CD14-positive monocyte (primary cell): ENCODE measurements at regions of chr16 and their contacts with region 1.

Region 1: GRCh38 chr16:89560378-89561141 is at the start of gene RPL13:
- DNase-seq: peak; percentile 93 to 97 (median 94)
- H3K4me3 ChIP-seq: peak within 1 kb of the TSS; percentile 64 to 95 (median 82)
- H3K4me3 Mint-ChIP-seq: peak within 1 kb of the TSS; percentile 92 to 98
- H3K27ac ChIP-seq: peak within 1 kb of the TSS; percentile 92 to 93
- H3K27ac Mint-ChIP-seq: peak within 1 kb of the TSS; percentile 95 to 99 (median 98)
- H3K4me1 ChIP-seq: peaks cover 41 to 57% of the 10 kb centered on the region in 2 donors
- H3K4me1 Mint-ChIP-seq: peaks cover 65% of the 10 kb centered on the region
- H3K27me3 ChIP-seq: peaks cover 0 to 2% of the 10 kb centered on the region in 2 donors
- H3K27me3 Mint-ChIP-seq: peaks cover 1 to 3% (median 1%) of the 10 kb centered on the region in 3 donors
- CTCF ChIP-seq: no peak
- polyA plus RNA-seq, gene RPL13: 1,251 to 2,437 (median 1,329) TPM

Region 2: GRCh38 chr16:89330177-89330856 is 230.2 kb before region 1 on chr16:
- intact Hi-C with region 1: loop called (anchors 5 kb)
- DNase-seq: peak; percentile 20 to 57 (median 37)
- H3K4me3 ChIP-seq: no peak overlapping the region
- H3K4me3 Mint-ChIP-seq: peak overlapping the region in 1 of 2 donors; percentile 64
- H3K27ac ChIP-seq: peak overlapping the region; percentile 61 to 79
- H3K27ac Mint-ChIP-seq: peak overlapping the region in 6 of 7 donors; percentile 66 to 87 (median 79)
- H3K4me1 ChIP-seq: peaks cover 38 to 59% of the 10 kb centered on the region in 2 donors
- H3K4me1 Mint-ChIP-seq: peaks cover 60% of the 10 kb centered on the region
- H3K27me3 ChIP-seq: no peaks in the 10 kb centered on the region
- H3K27me3 Mint-ChIP-seq: no peaks in the 10 kb centered on the region
- CTCF ChIP-seq: no peak

Region 3: GRCh38 chr16:89720813-89721545 is 160.4 kb after region 1 on chr16 and contains the starts of genes VPS9D1 and ZNF276:
- intact Hi-C with region 1: loop called in 1 of 2 experiments (anchors 5 kb)
- DNase-seq: peak; percentile 61 to 64 (median 61)
- H3K4me3 ChIP-seq: peak within 1 kb of the TSS; percentile 51 to 97 (median 64)
- H3K4me3 Mint-ChIP-seq: peak within 1 kb of the TSS; percentile 91 to 94
- H3K27ac ChIP-seq: peak within 1 kb of the TSS; percentile 92
- H3K27ac Mint-ChIP-seq: peak within 1 kb of the TSS; percentile 96 to 99 (median 98)
- H3K4me1 ChIP-seq: peaks cover 45 to 57% of the 10 kb centered on the region in 2 donors
- H3K4me1 Mint-ChIP-seq: peaks cover 51% of the 10 kb centered on the region
- H3K27me3 ChIP-seq: no peaks in the 10 kb centered on the region
- H3K27me3 Mint-ChIP-seq: no peaks in the 10 kb centered on the region
- CTCF ChIP-seq: no peak
- polyA plus RNA-seq, gene VPS9D1: 1.2 to 29.7 (median 1.6) TPM
- polyA plus RNA-seq, gene ZNF276: 2.2 to 54.5 (median 3.2) TPM

Region 4: GRCh38 chr16:89873972-89874689 is 313.6 kb after region 1 on chr16:
- intact Hi-C with region 1: loop called in 1 of 2 experiments (anchors 5 kb)
- DNase-seq: peak; percentile 92 to 98 (median 97)
- H3K4me3 ChIP-seq: peak overlapping the region; percentile 87 to 97 (median 95)
- H3K4me3 Mint-ChIP-seq: peak overlapping the region; percentile 86 to 93
- H3K27ac ChIP-seq: peak overlapping the region; percentile 99 to 100
- H3K27ac Mint-ChIP-seq: peak overlapping the region; percentile 98 to 99 (median 99)
- H3K4me1 ChIP-seq: peaks cover 18 to 22% of the 10 kb centered on the region in 2 donors
- H3K4me1 Mint-ChIP-seq: peaks cover 15% of the 10 kb centered on the region
- H3K27me3 ChIP-seq: no peaks in the 10 kb centered on the region
- H3K27me3 Mint-ChIP-seq: peaks cover 0 to 3% (median 1%) of the 10 kb centered on the region in 3 donors
- CTCF ChIP-seq: no peak